Gastrocnemius medialis (tissue), 4 donors: ENCODE measurements at regions of chr2 and their contacts with region 1.

Region 1: GRCh38 chr2:241355983-241356870 is at the start of gene FARP2:
- DNase-seq: peak; percentile 99
- ATAC-seq: peak; percentile 92 to 96
- H3K4me3 ChIP-seq: peak within 1 kb of the TSS; percentile 70 to 85 (median 82)
- H3K27ac ChIP-seq: peak within 1 kb of the TSS; percentile 80 to 95 (median 92)
- H3K4me1 ChIP-seq: peaks cover 23 to 30% of the 10 kb centered on the region in 2 donors
- H3K27me3 ChIP-seq: no peaks in the 10 kb centered on the region
- CTCF ChIP-seq: no peak
- POLR2A ChIP-seq: peak; percentile 87 to 88
- total RNA-seq, gene FARP2: 10.7 to 20.1 (median 13.6) TPM

Region 2: GRCh38 chr2:240250985-240251847 is 1105.0 kb before region 1 on chr2:
- in situ Hi-C with region 1: no loop called
- intact Hi-C with region 1: loop called (anchors 5 kb)
- DNase-seq: peak; percentile 91 to 97
- ATAC-seq: peak; percentile 79 to 82
- H3K4me3 ChIP-seq: peak overlapping the region; percentile 15 to 41 (median 32)
- H3K27ac ChIP-seq: peak overlapping the region; percentile 93 to 96 (median 95)
- H3K4me1 ChIP-seq: peaks cover 43 to 47% of the 10 kb centered on the region in 2 donors
- H3K27me3 ChIP-seq: no peaks in the 10 kb centered on the region
- CTCF ChIP-seq: no peak
- POLR2A ChIP-seq: peak; percentile 85

Region 3: GRCh38 chr2:241066893-241067341 is 289.3 kb before region 1 on chr2:
- in situ Hi-C with region 1: no loop called
- intact Hi-C with region 1: no loop called
- DNase-seq: no peak
- ATAC-seq: no peak
- H3K4me3 ChIP-seq: no peak overlapping the region
- H3K27ac ChIP-seq: no peak overlapping the region
- H3K4me1 ChIP-seq: no peaks in the 10 kb centered on the region
- H3K27me3 ChIP-seq: no peaks in the 10 kb centered on the region
- CTCF ChIP-seq: no peak
- POLR2A ChIP-seq: no peak

Region 4: DNA sequence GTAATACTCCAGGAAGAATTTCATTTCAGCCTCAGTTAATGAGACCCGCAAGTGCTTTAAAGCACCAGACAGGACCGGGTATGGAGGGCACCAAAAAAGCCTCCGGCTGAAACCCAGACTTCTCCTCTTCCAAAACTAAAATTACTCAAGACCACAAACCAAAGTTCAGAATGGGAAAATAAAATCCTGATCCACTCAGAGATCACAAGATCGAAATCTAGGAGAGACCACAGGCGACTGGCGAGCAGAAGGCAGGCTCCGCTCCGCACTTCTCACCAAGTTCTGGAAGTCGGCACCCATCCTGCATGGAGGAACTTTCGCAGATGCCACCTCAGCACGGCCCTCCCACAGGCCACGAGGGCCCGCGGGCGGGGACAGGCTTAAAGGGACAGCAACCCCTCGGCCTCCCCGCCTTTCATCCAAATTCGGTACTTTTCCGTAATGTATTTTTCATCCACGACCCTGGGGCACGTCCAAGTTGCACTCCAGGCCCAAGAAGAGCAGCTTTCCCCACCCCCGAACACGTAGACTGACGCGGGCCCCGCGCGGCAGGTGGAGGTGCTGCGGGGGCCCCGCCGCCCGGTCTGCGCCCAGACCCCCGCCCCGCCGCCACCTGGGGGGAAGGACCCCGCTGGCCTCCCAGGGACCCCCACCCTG is 84.5 kb before region 1 on chr2:
- in situ Hi-C with region 1: no loop called
- intact Hi-C with region 1: loop called (anchors 2 kb)
- DNase-seq: peak; percentile 80 to 81
- ATAC-seq: peak; percentile 88 to 90
- H3K4me3 ChIP-seq: peak overlapping the region; percentile 67 to 93 (median 73)
- H3K27ac ChIP-seq: peak overlapping the region; percentile 83 to 97 (median 92)
- H3K4me1 ChIP-seq: peaks cover 42 to 43% of the 10 kb centered on the region in 2 donors
- H3K27me3 ChIP-seq: no peaks in the 10 kb centered on the region
- CTCF ChIP-seq: no peak
- POLR2A ChIP-seq: peak in 1 of 2 donors; percentile 46

Region 5: DNA sequence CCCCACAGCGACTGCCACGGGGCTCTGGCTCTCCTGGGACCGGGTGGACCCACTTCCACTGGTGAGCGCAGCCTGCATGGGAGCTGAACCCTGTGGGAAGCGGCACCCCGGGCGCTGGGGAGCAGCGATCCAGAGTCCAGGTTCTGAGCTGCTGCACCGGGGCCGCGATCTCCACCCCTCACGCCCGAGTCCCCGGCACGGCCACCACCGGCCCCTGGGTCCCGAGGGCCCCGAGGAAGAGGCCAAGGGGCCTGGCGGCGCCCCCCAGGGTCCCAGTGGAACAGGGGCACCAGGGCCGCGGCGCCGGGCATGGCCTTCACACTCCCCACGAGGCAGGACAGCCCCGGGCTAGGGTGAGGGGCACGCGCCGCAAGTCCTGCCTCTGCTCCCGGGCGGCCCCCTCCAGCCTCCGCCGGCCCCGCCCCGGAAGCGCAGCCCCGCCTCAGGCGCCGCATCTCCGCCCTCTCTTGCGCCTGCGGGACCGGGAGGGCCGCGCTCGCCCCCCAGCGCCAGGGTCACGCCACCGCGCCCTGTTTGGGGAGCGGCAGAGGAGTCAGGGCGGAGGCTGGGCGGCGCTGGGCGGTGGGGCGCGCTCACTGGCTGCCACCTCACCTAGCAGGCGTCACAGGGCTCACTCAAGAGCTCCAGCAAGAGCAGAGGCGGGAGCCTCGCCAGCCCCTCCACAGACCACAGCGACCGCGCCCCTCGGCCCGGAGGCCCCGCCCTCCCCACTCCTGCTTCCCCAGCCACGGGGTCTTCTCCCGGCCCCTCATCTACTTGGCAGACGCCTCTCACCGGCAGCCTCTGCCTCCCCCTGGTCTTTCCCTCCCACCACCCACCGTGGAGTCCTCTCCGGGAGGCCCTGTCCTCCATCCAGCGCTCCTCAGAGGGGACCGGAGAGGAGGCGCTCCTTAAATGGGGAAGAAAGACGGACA is 253.9 kb after region 1 on chr2:
- in situ Hi-C with region 1: no loop called
- intact Hi-C with region 1: loop called (anchors 2 kb)
- DNase-seq: peak; percentile 55 to 78
- ATAC-seq: peak; percentile 86
- H3K4me3 ChIP-seq: peak overlapping the region; percentile 67 to 80 (median 70)
- H3K27ac ChIP-seq: peak overlapping the region; percentile 72 to 85 (median 78)
- H3K4me1 ChIP-seq: peaks cover 7 to 14% of the 10 kb centered on the region in 2 donors
- H3K27me3 ChIP-seq: no peaks in the 10 kb centered on the region
- CTCF ChIP-seq: peak; percentile 48 to 87 (median 56)
- POLR2A ChIP-seq: peak; percentile 23 to 47

Region 6: DNA sequence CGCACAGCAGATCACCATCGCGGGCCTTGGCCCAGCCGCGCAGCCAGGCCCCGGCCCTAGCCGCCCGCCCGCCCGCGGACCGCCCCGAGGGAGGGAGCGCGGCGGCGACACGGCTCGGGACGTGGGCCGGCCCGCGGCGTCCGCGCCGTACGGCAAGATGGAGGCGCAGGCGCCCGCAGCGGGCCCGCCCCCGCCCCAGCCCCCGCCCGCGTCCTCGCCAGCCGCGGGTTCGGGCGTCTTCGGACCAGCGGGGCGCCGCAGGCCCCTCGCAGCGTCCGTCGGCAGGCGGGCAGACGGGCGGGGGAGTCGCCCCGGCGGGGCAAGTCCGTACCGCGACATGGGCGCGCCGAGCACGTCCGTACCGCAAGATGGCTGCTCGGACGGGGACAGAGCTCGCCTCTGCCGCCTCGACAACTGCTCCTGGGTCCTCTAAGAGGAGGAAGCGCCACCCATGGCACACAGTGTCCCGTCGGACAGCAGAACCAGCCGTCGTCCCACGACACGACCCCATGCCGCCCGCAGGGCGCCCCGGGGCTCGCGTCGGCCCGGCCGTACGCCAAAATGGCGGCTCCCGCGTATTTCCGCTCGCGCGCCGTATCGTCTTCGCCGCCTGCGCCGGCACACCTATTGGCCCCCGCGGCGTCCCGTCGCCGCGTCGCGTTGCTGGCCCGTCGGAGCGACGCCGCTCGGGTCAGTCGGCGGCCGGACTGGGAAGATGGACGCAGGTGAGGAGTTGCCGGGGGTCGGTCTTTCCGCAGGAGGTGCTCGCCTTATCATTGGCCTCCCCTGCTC is 281.0 kb after region 1 on chr2 and contains the starts of genes ATG4B and THAP4:
- in situ Hi-C with region 1: no loop called
- intact Hi-C with region 1: loop called (anchors 10 kb)
- DNase-seq: peak; percentile 70 to 81
- ATAC-seq: peak; percentile 90 to 91
- H3K4me3 ChIP-seq: peak within 1 kb of the TSS; percentile 73 to 95 (median 92)
- H3K27ac ChIP-seq: peak within 1 kb of the TSS; percentile 92 to 100 (median 98)
- H3K4me1 ChIP-seq: peaks cover 36 to 49% of the 10 kb centered on the region in 2 donors
- H3K27me3 ChIP-seq: no peaks in the 10 kb centered on the region
- CTCF ChIP-seq: peak in 1 of 5 experiments; percentile 51
- POLR2A ChIP-seq: peak; percentile 65 to 74
- total RNA-seq, gene ATG4B: 32.0 to 57.5 (median 49.8) TPM
- total RNA-seq, gene THAP4: 71.3 to 83.3 (median 79.9) TPM